ENCODE measurements at regions of chr17 and their contacts with region 1.

Region 1: GRCh38 chr17:81253358-81254131 is 14.4 kb downstream of the NDUFAF8 start:
- DNase-seq: peak in 1 of 2 donors; percentile 48
- ATAC-seq: peak; percentile 53 to 65 (median 54)
- H3K4me3 ChIP-seq: no peak overlapping the region
- H3K27ac ChIP-seq: no peak overlapping the region
- H3K4me1 ChIP-seq: peaks cover 18% of the 10 kb centered on the region
- H3K27me3 ChIP-seq: no peaks in the 10 kb centered on the region
- CTCF ChIP-seq: peak; percentile 83

Region 2: GRCh38 chr17:81200695-81201580 is 52.6 kb before region 1 on chr17:
- intact Hi-C with region 1: no loop called
- DNase-seq: no peak
- ATAC-seq: peak in 3 of 4 donors; percentile 42 to 65 (median 49)
- H3K4me3 ChIP-seq: no peak overlapping the region
- H3K27ac ChIP-seq: no peak overlapping the region
- H3K4me1 ChIP-seq: no peaks in the 10 kb centered on the region
- H3K27me3 ChIP-seq: no peaks in the 10 kb centered on the region
- CTCF ChIP-seq: peak; percentile 37

Region 3: GRCh38 chr17:81294856-81295680 is 41.5 kb after region 1 on chr17 and contains the start of gene SLC38A10:
- intact Hi-C with region 1: loop called in 1 of 2 experiments (anchors 5 kb)
- DNase-seq: peak; percentile 92 to 96
- ATAC-seq: peak; percentile 90 to 94 (median 92)
- H3K4me3 ChIP-seq: peak within 1 kb of the TSS; percentile 75
- H3K27ac ChIP-seq: peak within 1 kb of the TSS; percentile 96
- H3K4me1 ChIP-seq: peaks cover 37% of the 10 kb centered on the region
- H3K27me3 ChIP-seq: no peaks in the 10 kb centered on the region
- CTCF ChIP-seq: no peak
- total RNA-seq, gene SLC38A10: 16.7 to 23.9 (median 18.6) TPM

Region 4: GRCh38 chr17:81401723-81402529 is 148.4 kb after region 1 on chr17:
- intact Hi-C with region 1: no loop called
- DNase-seq: peak; percentile 62 to 70
- ATAC-seq: peak in 2 of 4 donors; percentile 17 to 24
- H3K4me3 ChIP-seq: peak overlapping the region; percentile 76
- H3K27ac ChIP-seq: peak overlapping the region; percentile 99
- H3K4me1 ChIP-seq: peaks cover 62% of the 10 kb centered on the region
- H3K27me3 ChIP-seq: no peaks in the 10 kb centered on the region
- CTCF ChIP-seq: peak; percentile 12

Region 5: GRCh38 chr17:81440876-81441244 is 187.3 kb after region 1 on chr17:
- intact Hi-C with region 1: no loop called
- DNase-seq: no peak
- ATAC-seq: peak in 1 of 4 donors; percentile 31
- H3K4me3 ChIP-seq: no peak overlapping the region
- H3K27ac ChIP-seq: no peak overlapping the region
- H3K4me1 ChIP-seq: peaks cover 3% of the 10 kb centered on the region
- H3K27me3 ChIP-seq: no peaks in the 10 kb centered on the region
- CTCF ChIP-seq: no peak

Region 6: GRCh38 chr17:81537343-81537855 is 283.9 kb after region 1 on chr17:
- intact Hi-C with region 1: loop called (anchors 2 kb)
- DNase-seq: peak; percentile 59 to 83
- ATAC-seq: peak; percentile 71 to 89 (median 78)
- H3K4me3 ChIP-seq: no peak overlapping the region
- H3K27ac ChIP-seq: no peak overlapping the region
- H3K4me1 ChIP-seq: peaks cover 15% of the 10 kb centered on the region
- H3K27me3 ChIP-seq: peaks cover 0 to 37% (median 11%) of the 10 kb centered on the region in 3 donors
- CTCF ChIP-seq: peak; percentile 79

Region 7: DNA sequence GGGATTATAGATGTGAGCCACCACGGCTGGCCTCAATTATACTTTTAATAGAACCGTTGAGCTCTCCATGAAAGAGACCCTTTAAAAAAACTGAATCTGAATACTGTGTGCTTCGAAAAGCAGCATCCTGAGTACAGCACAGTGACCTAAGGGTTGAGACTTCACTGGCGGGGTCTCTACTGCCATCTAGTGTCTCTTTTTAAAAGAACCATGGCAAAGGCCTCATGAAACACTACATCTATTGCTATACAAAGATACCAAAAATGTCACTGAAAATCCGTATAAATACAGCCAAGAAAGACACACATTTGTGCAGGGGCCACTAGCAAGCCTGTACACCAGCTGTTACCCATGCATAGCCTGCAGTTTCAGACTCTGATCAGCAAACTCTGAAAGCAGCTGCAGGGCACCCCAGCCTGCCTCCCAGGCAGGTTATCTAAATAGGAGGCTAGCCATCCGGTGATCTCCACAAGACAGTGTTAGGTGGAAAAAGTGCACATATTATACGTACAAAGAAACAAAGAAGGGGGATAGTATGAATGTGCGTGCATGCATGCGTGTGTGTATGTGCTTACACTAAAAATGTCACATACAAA is 348.1 kb after region 1 on chr17:
- intact Hi-C with region 1: loop called in 1 of 2 experiments (anchors 2 kb)
- DNase-seq: no peak
- ATAC-seq: peak; percentile 57 to 78 (median 70)
- H3K4me3 ChIP-seq: no peak overlapping the region
- H3K27ac ChIP-seq: no peak overlapping the region
- H3K4me1 ChIP-seq: peaks cover 3% of the 10 kb centered on the region
- H3K27me3 ChIP-seq: no peaks in the 10 kb centered on the region
- CTCF ChIP-seq: peak; percentile 62

Measured in psoas muscle (tissue), 8 donors.